ENCODE measurements at regions of chr6 and their contacts with region 1.

Region 1: DNA sequence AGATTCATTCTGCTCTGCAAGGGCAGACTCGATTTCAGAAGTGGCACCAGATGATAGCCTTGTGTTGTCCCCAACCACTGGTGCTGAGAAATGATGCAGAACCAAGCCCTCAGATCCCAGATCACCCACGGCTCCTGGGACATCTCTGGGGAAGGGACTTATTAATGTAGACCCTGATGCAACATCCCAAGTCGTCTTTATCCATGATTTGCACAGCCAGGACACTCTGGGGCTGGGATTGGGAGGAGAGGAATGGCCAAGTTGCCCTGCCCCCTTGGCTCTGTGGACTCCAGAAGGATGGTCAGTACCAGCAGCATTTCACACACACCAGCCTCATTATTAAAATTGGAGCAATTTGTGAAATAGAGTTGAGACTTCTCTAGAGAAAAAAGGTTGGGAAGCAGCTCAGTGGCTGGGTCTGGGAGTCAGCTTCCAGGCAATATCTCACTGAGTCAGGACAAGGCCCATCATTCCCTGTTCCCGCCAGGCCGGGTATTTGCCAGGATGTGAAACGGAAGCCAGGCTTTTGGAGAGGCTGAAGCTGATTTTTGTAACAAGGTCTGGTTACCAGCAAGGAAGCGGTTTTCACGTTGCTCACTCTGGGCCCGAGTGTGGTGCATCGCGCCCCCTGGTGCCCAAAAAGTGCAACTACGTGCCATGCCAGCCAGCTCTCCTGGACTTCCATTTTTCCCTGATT is 67.4 kb downstream of the ZBTB2 start:
- DNase-seq: peak; percentile 93
- ATAC-seq: peak; percentile 87
- H3K4me3 ChIP-seq: no peak overlapping the region
- H3K27ac ChIP-seq: peak overlapping the region; percentile 7; the same call in 1 of the 2 replicates
- H3K4me1 ChIP-seq: peaks cover 6% of the 10 kb centered on the region; the same call in 1 of the 2 replicates
- H3K27me3 ChIP-seq: no peaks in the 10 kb centered on the region
- CTCF ChIP-seq: peak; percentile 96
- POLR2A ChIP-seq: no peak
- RAD21 ChIP-seq: peak; percentile 96

Region 2: GRCh38 chr6:150822932-150823331 is 501.0 kb before region 1 on chr6:
- CTCF ChIA-PET with region 1: interaction called, 16 read pairs
- POLR2A ChIA-PET with region 1: no interaction called
- dilution Hi-C with region 1: no loop called
- in situ Hi-C with region 1: loop called (anchors 10 kb)
- intact Hi-C with region 1: no loop called
- DNase-seq: no peak
- ATAC-seq: no peak
- H3K4me3 ChIP-seq: no peak overlapping the region
- H3K27ac ChIP-seq: no peak overlapping the region
- H3K4me1 ChIP-seq: no peaks in the 10 kb centered on the region
- H3K27me3 ChIP-seq: no peaks in the 10 kb centered on the region
- CTCF ChIP-seq: no peak
- POLR2A ChIP-seq: no peak
- RAD21 ChIP-seq: no peak

Region 3: GRCh38 chr6:151014404-151015100 is 309.4 kb before region 1 on chr6:
- CTCF ChIA-PET with region 1: interaction called, 56 read pairs
- POLR2A ChIA-PET with region 1: no interaction called
- dilution Hi-C with region 1: no loop called
- in situ Hi-C with region 1: loop called (anchors 5 kb)
- intact Hi-C with region 1: loop called (anchors 2 kb)
- DNase-seq: peak; percentile 71
- ATAC-seq: peak; percentile 43
- H3K4me3 ChIP-seq: no peak overlapping the region
- H3K27ac ChIP-seq: peak overlapping the region; percentile 88
- H3K4me1 ChIP-seq: peaks cover 20% of the 10 kb centered on the region
- H3K27me3 ChIP-seq: no peaks in the 10 kb centered on the region
- CTCF ChIP-seq: peak; percentile 77
- POLR2A ChIP-seq: no peak
- RAD21 ChIP-seq: peak; percentile 81

Region 4: GRCh38 chr6:151109361-151109760 is 214.6 kb before region 1 on chr6:
- CTCF ChIA-PET with region 1: interaction called, 5 read pairs
- POLR2A ChIA-PET with region 1: no interaction called
- dilution Hi-C with region 1: no loop called
- in situ Hi-C with region 1: no loop called
- intact Hi-C with region 1: loop called (anchors 2 kb)
- DNase-seq: peak; percentile 84
- ATAC-seq: peak; percentile 92
- H3K4me3 ChIP-seq: no peak overlapping the region
- H3K27ac ChIP-seq: no peak overlapping the region
- H3K4me1 ChIP-seq: peaks cover 9% of the 10 kb centered on the region
- H3K27me3 ChIP-seq: peaks cover 36% of the 10 kb centered on the region
- CTCF ChIP-seq: no peak
- POLR2A ChIP-seq: no peak
- RAD21 ChIP-seq: 0 out of 2 replicates have a peak, but pooled peaks have one; percentile 4

Region 5: DNA sequence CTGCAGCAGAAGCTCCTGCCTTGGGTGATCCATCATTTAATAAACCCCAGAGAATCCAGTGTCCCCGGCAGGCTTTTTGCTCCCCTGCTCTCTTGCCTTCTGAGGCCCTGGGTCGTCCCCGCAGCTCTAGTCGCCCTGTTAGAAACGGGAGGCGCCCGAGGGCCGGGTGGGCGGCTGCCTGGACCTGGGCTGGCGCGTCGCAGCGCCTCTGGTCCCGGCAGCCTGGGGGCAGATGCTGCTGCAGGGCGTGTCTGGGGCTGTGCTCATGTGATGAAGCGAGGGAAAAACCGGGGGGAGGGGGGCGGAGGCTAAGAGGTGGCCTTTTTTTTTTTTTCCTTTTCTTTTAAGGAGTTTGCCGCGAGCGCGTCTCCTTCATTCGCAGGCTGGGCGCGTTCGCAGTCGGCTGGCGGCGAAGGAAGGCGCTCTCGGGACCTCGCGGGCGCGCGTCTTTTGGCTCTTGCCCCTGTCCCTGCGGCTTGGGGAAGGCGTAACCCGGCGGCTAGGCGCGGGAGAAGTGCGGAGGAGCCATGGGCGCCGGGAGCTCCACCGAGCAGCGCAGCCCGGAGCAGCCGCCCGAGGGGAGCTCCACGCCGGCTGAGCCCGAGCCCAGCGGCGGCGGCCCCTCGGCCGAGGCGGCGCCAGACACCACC is 83.8 kb before region 1 on chr6:
- CTCF ChIA-PET with region 1: interaction called, 3 read pairs
- POLR2A ChIA-PET with region 1: no interaction called
- dilution Hi-C with region 1: no loop called
- in situ Hi-C with region 1: no loop called
- intact Hi-C with region 1: loop called (anchors 1 kb)
- DNase-seq: peak; percentile 64
- ATAC-seq: peak; percentile 73
- H3K4me3 ChIP-seq: peak overlapping the region; percentile 69
- H3K27ac ChIP-seq: peak overlapping the region; percentile 68
- H3K4me1 ChIP-seq: no peaks in the 10 kb centered on the region
- H3K27me3 ChIP-seq: peaks cover 3% of the 10 kb centered on the region; the same call in 1 of the 2 replicates
- CTCF ChIP-seq: no peak
- POLR2A ChIP-seq: peak; percentile 74; the same call in 1 of the 2 replicates
- RAD21 ChIP-seq: no peak

Region 6: GRCh38 chr6:151409260-151409659 is 85.3 kb after region 1 on chr6:
- CTCF ChIA-PET with region 1: no interaction called
- POLR2A ChIA-PET with region 1: no interaction called
- dilution Hi-C with region 1: no loop called
- in situ Hi-C with region 1: no loop called
- intact Hi-C with region 1: no loop called
- DNase-seq: no peak
- ATAC-seq: no peak
- H3K4me3 ChIP-seq: no peak overlapping the region
- H3K27ac ChIP-seq: no peak overlapping the region
- H3K4me1 ChIP-seq: no peaks in the 10 kb centered on the region
- H3K27me3 ChIP-seq: no peaks in the 10 kb centered on the region
- CTCF ChIP-seq: no peak
- POLR2A ChIP-seq: no peak
- RAD21 ChIP-seq: no peak

Region 7: DNA sequence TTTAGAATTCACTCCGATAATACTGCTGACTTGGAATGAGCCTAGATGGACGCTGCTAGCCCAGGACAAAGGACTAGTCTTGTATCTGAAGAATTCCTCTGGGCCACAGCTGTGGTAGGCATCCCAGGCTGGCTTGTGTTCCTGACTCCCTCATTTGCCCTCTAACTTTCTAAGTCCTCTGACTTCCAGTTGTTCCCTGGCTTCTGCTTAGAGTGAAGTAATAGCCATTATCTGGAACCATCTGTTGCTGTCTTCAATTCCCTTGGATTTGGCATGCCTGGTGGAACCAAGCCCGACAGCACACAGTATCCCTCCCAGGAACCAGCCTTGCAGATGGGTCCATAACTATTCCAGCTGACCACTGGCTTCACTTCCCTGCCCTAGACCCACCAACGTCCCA is 937.2 kb after region 1 on chr6:
- CTCF ChIA-PET with region 1: no interaction called
- POLR2A ChIA-PET with region 1: no interaction called
- dilution Hi-C with region 1: no loop called
- in situ Hi-C with region 1: no loop called
- intact Hi-C with region 1: no loop called
- DNase-seq: no peak
- ATAC-seq: no peak
- H3K4me3 ChIP-seq: no peak overlapping the region
- H3K27ac ChIP-seq: no peak overlapping the region
- H3K4me1 ChIP-seq: no peaks in the 10 kb centered on the region; the same call in 1 of the 2 replicates
- H3K27me3 ChIP-seq: no peaks in the 10 kb centered on the region
- CTCF ChIP-seq: no peak
- POLR2A ChIP-seq: no peak
- RAD21 ChIP-seq: no peak

Measured in IMR-90 (cell line).